Activated B cell treated with CpG ODN at 0.5 μM for 24 hours (primary cell): ENCODE measurements at regions of chr6 and their contacts with region 1.

Region 1: DNA sequence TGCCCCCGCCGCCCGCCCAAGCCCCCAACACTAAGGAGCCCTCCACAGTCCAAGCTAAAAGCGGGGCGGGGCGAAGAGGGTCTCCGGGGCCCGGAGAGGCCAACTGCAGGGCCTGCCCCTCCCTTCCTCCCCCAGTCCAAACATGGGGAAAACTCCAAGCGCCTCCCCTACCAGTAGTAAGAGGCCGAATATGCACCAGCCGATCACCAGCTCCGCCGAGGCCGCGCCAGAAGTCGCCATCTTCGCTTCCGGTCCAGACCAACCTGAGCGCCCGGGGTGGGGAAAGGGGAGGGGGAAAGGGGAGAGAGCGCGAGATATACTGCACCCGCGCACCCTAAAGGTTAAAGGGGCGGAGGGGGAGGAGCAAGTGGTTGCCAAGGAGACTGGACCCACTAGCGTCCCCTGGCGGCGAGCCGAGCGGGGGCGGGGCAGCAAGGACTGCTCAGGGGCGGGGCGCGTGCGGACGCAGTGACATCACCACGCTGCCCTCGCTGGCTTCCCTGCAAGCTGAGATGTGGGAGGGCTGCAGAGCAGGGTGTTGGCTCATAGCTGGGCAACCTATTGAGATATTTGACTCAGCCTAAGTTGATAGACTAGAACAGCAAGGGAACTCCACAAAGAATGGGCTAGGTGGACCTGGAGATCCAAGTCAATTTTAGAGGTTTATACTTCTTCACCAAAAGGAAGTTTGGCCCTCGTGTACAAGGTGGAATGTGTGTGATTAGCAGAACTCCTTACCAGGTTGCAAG is at the start of gene LMBRD1:
- DNase-seq: peak; percentile 100
- ATAC-seq: peak; percentile 81
- H3K4me3 Mint-ChIP-seq: peak within 1 kb of the TSS; percentile 95
- H3K27ac Mint-ChIP-seq: peak within 1 kb of the TSS; percentile 97
- H3K4me1 Mint-ChIP-seq: peaks cover 47% of the 10 kb centered on the region
- H3K27me3 Mint-ChIP-seq: no peaks in the 10 kb centered on the region
- CTCF ChIP-seq: peak; percentile 53
- total RNA-seq, gene LMBRD1: 46.9 and 51.3 TPM in 2 replicates

Region 2: GRCh38 chr6:69732640-69733039 is 64.2 kb before region 1 on chr6:
- CTCF ChIA-PET with region 1: interaction called, 3 read pairs
- POLR2A ChIA-PET with region 1: interaction called, 12 read pairs
- intact Hi-C with region 1: loop called (anchors 1 kb)
- DNase-seq: no peak
- ATAC-seq: peak; percentile 64
- H3K4me3 Mint-ChIP-seq: no peak overlapping the region
- H3K27ac Mint-ChIP-seq: no peak overlapping the region
- H3K4me1 Mint-ChIP-seq: peaks cover 13% of the 10 kb centered on the region
- H3K27me3 Mint-ChIP-seq: no peaks in the 10 kb centered on the region
- CTCF ChIP-seq: no peak

Region 3: DNA sequence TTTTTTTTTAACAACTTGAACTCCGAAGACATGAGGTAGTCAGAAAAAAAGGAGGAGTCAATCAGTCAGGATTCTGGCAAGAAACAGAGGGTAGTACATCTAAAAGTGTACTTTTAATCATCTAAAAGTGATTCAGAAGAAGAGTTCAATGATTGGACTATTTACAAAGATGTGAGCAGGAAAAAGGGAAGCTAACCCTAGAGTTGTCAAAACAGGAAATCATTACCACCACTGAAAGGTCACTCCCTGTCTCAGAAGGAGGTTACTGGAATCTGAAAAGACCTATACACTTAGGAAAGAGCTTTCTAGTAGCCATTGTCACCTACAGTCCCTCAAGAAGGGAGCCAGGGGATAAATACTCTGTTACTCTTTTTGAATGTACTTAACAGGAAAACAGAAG is 16.7 kb after region 1 on chr6:
- CTCF ChIA-PET with region 1: interaction called, 12 read pairs
- POLR2A ChIA-PET with region 1: interaction called, 106 read pairs
- intact Hi-C with region 1: loop called (anchors 1 kb)
- DNase-seq: no peak
- ATAC-seq: peak; percentile 56
- H3K4me3 Mint-ChIP-seq: peak overlapping the region; percentile 56
- H3K27ac Mint-ChIP-seq: peak overlapping the region; percentile 97
- H3K4me1 Mint-ChIP-seq: peaks cover 79% of the 10 kb centered on the region
- H3K27me3 Mint-ChIP-seq: no peaks in the 10 kb centered on the region
- CTCF ChIP-seq: no peak

Region 4: GRCh38 chr6:69881322-69882151 is 84.7 kb after region 1 on chr6:
- CTCF ChIA-PET with region 1: interaction called, 4 read pairs
- POLR2A ChIA-PET with region 1: interaction called, 26 read pairs
- intact Hi-C with region 1: loop called (anchors 1 kb)
- DNase-seq: no peak
- ATAC-seq: peak; percentile 87
- H3K4me3 Mint-ChIP-seq: peak overlapping the region; percentile 79
- H3K27ac Mint-ChIP-seq: peak overlapping the region; percentile 99
- H3K4me1 Mint-ChIP-seq: peaks cover 77% of the 10 kb centered on the region
- H3K27me3 Mint-ChIP-seq: no peaks in the 10 kb centered on the region
- CTCF ChIP-seq: no peak

Region 5: DNA sequence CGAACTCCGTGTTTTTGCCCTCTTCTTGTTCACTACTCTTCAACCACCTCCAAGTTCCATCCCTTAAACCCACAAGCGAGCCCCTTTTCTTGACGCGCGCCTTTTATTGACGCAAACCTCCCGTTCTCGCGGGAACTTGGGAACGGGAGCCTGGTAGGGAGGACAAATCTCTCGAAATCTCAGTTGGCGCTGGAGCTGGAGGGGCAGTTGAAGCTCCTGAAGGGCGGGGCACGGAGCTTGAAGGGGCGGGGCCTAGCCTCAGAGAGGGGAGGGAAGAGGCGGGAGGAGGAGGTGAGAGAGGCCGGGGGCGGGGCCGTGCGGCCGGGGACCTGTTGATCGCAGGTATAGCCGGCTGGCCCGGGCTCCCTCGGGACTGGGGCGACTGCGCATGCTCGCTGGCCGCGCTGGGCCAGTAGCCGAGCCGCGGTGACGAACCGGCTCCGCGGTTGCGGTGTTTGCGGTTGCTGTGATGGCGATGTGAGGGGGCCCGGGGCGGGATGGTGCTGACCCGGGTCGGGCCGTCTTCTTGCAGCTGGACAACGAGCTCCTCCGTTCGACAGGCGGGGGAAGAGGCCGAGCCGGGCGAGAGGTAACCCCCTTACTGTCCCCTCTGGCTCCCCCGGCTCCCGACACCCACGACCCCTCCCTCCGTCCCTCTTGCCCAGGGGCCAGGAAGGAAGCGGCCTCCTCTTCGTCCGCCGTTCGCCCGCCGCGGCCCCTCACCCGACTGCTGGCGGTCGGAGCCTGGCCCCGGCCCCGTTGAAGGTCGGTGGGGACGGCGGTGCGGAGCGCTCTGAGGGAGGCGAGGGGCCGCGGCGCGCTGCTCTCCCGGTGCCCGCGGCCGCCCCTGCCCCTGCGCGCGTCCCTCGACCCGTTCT is 616.5 kb after region 1 on chr6 and contains the start of gene FAM135A:
- CTCF ChIA-PET with region 1: no interaction called
- POLR2A ChIA-PET with region 1: interaction called, 5 read pairs
- intact Hi-C with region 1: loop called (anchors 2 kb)
- DNase-seq: peak; percentile 96
- ATAC-seq: peak; percentile 98
- H3K4me3 Mint-ChIP-seq: peak within 1 kb of the TSS; percentile 92
- H3K27ac Mint-ChIP-seq: peak within 1 kb of the TSS; percentile 86
- H3K4me1 Mint-ChIP-seq: peaks cover 23% of the 10 kb centered on the region
- H3K27me3 Mint-ChIP-seq: no peaks in the 10 kb centered on the region
- CTCF ChIP-seq: no peak
- total RNA-seq, gene FAM135A: 15.6 and 18.2 TPM in 2 replicates